AG04449 (cell line): ENCODE measurements at regions of chr17 and their contacts with region 1.

Region 1: GRCh38 chr17:79045842-79046196 is 21.9 kb downstream of the C1QTNF1 start:
- DNase-seq: no peak
- H3K4me3 ChIP-seq: no peak overlapping the region
- CTCF ChIP-seq: peak; percentile 98

Region 2: DNA sequence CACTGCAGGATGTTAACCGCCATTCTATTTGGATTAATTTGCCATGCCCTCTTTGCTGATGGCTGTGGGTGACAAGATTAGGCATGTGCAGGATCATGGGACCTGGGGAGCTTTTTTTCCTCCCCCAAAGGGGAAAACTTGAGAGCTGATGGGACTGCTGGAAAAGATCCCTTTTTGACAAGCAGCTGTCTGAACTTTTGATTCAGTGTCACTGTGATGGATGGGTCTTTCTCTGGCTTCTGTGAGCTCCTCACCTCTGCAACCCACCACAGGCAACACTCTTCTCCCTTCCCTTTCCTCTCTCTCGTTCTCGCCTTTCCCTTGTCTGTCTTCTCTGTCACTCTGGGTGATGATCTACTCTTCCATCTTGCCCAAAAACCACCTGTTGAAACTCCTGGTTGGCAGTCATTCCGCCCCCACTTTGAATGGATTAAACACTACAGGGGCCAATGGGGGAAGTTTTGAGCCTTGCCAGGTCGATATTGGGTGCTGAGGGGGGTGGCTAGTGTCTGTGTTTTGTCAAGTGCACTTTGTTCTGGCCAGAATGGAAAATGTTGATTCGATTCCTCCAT is 33.2 kb before region 1 on chr17:
- CTCF ChIA-PET with region 1: interaction called, 160 read pairs
- POLR2A ChIA-PET with region 1: no interaction called
- DNase-seq: no peak
- H3K4me3 ChIP-seq: no peak overlapping the region
- CTCF ChIP-seq: no peak

Region 3: GRCh38 chr17:79027925-79028813 is 17.6 kb before region 1 on chr17:
- CTCF ChIA-PET with region 1: interaction called, 160 read pairs
- POLR2A ChIA-PET with region 1: no interaction called
- DNase-seq: no peak
- H3K4me3 ChIP-seq: no peak overlapping the region
- CTCF ChIP-seq: peak; percentile 22

Region 4: DNA sequence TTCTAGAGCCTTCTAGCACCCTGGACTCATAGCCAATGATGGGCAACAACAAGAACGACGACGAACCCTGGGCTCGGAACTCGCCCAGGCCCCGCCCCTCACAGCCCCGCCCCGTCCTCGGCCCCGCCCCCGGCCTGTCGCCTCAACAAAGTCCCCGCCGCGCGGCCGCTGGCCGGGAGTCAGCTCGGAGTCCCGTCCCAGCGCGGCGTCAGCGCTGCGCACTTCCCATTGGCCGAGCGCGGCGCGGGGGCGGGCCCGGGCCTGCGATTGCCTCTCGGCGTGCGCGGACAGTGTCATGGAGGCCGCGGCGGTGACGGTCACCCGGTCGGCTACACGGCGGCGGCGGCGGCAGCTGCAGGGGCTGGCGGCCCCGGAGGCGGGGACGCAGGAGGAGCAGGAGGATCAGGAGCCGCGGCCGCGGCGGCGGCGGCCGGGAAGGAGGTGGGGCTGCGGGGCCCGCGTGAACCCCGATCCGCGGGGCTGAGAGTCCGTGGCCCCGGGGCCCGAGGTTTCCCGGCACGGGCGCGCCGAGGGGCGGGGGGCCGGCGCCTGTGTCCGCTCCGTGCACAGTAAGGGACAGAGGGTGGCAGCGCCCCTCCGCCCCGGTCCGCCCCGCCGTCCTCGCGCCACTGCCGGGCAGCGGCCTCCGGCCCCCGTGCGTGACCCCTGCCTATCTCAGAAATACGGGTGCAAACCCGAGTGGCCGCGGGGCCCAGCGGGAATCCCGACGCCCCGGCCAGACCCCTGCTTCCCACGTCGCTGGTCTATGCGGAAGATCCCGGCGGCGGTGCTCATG is 29.0 kb after region 1 on chr17 and contains the start of gene ENGASE:
- CTCF ChIA-PET with region 1: interaction called, 25 read pairs
- POLR2A ChIA-PET with region 1: no interaction called
- DNase-seq: peak; percentile 14
- H3K4me3 ChIP-seq: peak within 1 kb of the TSS; percentile 65
- CTCF ChIP-seq: no peak

Region 5: DNA sequence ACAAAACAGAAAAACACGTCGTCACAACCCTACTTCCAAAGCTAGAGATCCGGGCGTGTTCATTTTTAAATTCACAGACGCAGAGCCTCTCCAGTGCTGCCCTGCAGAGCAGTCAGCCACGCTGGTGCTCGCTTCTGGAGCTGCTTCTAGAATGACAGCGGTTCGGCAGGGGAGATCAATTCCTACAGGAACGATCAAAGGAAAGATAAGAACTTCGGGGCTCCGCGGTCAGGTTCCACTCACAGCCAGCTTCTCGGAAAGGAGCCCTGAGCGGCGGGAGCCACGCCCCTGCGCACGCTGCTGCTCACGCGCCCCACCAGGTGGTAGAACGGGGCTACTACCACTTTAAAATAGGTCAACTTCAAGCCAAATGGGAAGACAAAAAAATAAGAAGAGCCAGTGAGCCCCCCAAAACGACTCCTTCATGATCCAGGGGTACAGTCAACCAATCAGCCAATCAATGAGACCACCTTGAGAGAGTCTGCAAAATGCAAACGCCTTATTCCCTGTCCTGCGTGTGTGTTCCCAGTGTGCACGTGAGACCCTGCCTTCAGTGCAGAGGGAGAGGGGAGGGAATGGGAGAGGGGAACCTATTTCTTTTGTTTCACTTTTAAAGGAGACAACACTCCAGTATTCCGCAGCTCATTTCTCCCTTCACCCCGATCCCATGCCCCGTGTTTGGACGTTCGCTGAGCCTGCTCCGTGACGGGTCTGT is 355.3 kb after region 1 on chr17:
- CTCF ChIA-PET with region 1: interaction called, 10 read pairs
- POLR2A ChIA-PET with region 1: no interaction called
- DNase-seq: no peak
- H3K4me3 ChIP-seq: peak overlapping the region; percentile 42
- CTCF ChIP-seq: peak; percentile 90